Activated CD8-positive, alpha-beta memory T cell treated with anti-CD3 and anti-CD28 coated beads, Interleukin-2, amount 10 ng/mL, durations not matched to agents 7 days and 5 days (primary cell): ENCODE measurements at regions of chr12 and their contacts with region 1.

Region 1: GRCh38 chr12:53344824-53345485 is 8.8 kb upstream of the SP7 start:
- DNase-seq: peak; percentile 82
- ATAC-seq: peak; percentile 83
- H3K4me3 Mint-ChIP-seq: peak overlapping the region; percentile 79
- H3K27ac Mint-ChIP-seq: peak overlapping the region; percentile 71
- H3K4me1 Mint-ChIP-seq: peaks cover 21% of the 10 kb centered on the region
- H3K27me3 Mint-ChIP-seq: peaks cover 12% of the 10 kb centered on the region

Region 2: GRCh38 chr12:53295070-53295890 is 49.7 kb before region 1 on chr12 and contains the start of gene PFDN5:
- CTCF ChIA-PET with region 1: interaction called, 14 read pairs
- DNase-seq: peak; percentile 93
- ATAC-seq: peak; percentile 88
- H3K4me3 Mint-ChIP-seq: peak within 1 kb of the TSS; percentile 98
- H3K27ac Mint-ChIP-seq: peak within 1 kb of the TSS; percentile 92
- H3K4me1 Mint-ChIP-seq: peaks cover 49% of the 10 kb centered on the region
- H3K27me3 Mint-ChIP-seq: no peaks in the 10 kb centered on the region
- total RNA-seq, gene PFDN5: 283 to 298 TPM

Region 3: DNA sequence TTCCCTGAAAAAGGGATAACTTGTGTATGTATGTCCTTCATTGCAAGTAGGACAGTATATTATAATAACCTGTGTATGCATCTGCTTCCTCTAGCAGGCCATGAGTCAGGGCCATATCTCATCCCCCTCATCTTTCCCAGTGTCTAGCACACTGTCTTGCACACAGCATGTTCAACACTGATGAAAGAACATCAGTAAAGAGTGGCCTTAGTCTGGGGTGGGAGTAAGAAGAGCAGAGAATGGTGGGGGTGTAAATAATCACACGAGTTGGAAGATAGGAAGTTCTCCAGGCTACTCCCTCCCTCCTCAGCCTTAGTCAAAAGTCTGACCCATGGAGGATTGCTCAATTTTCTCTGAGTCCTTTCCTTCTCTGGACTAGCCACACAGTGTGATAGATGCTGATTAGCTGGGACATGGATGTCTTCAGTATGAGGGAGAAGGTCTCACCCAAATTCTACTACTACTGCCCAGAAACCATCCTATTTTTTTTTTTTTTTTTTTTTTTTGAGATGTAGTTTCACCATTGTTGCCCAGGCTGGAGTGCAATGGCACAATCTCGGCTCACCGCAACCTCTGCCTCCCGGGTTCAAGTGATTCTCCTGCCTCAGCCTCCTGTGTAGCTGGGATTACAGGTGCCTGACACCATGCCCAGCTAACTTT is 20.4 kb after region 1 on chr12:
- CTCF ChIA-PET with region 1: interaction called, 11 read pairs
- DNase-seq: no peak
- ATAC-seq: no peak
- H3K4me3 Mint-ChIP-seq: no peak overlapping the region
- H3K27ac Mint-ChIP-seq: no peak overlapping the region
- H3K4me1 Mint-ChIP-seq: peaks cover 11% of the 10 kb centered on the region
- H3K27me3 Mint-ChIP-seq: no peaks in the 10 kb centered on the region

Region 4: GRCh38 chr12:53379389-53380103 is 34.6 kb after region 1 on chr12:
- CTCF ChIA-PET with region 1: interaction called, 110 read pairs
- DNase-seq: peak; percentile 99
- ATAC-seq: peak; percentile 77
- H3K4me3 Mint-ChIP-seq: no peak overlapping the region
- H3K27ac Mint-ChIP-seq: no peak overlapping the region
- H3K4me1 Mint-ChIP-seq: peaks cover 34% of the 10 kb centered on the region
- H3K27me3 Mint-ChIP-seq: no peaks in the 10 kb centered on the region

Region 5: DNA sequence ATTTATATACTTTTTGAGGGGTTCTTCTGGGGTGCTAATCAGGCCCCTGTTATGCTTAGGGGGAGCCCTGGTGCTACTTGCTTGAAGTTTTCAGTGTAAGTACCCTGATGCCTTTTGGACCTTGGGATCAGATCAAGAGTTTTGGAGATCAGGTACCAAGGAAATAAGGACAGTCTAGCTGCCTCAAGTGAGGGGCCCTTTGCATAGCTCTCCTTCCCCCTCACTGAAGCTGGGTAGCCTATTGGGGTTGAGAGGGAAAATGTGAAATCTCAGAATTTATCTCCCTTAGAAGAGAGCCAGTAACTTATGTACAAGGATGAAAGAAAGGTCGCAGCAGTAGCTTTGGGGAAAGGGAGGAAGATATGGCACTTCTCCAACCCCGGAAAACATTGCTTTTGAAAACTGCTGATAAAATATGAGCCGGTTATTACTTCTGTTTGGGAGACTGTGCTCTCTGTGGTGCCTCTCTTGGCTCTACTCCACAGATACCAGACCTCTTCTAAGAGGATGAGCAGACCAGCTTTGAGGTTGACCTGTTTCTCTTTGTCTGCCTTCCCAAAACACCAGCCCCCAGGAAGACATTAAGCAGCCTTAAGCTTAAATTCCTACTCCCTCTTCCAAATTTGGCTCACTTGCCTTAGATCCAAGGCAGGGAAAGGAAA is 69.9 kb after region 1 on chr12:
- CTCF ChIA-PET with region 1: interaction called, 11 read pairs
- DNase-seq: no peak
- ATAC-seq: no peak
- H3K4me3 Mint-ChIP-seq: no peak overlapping the region
- H3K27ac Mint-ChIP-seq: no peak overlapping the region
- H3K4me1 Mint-ChIP-seq: peaks cover 23% of the 10 kb centered on the region
- H3K27me3 Mint-ChIP-seq: no peaks in the 10 kb centered on the region

Region 6: DNA sequence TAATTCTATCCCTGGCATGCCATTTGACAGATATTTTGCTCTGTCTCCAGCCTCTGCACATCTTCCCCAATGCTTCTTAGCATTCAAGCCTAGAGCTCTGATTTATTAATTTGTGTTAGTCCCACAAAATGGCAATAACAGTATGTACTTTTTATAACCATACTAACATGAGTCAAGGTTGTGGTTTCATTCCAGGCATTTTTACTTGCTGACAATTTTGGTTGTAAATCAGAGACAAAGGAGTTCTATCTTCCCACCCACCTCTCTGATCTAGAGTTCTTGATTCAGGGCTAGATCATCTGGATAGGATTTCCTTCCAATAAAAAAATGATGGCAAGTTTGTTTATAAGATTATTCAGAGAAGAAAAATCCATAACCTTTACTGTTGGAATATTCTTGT is 425.3 kb after region 1 on chr12:
- CTCF ChIA-PET with region 1: no interaction called
- DNase-seq: no peak
- ATAC-seq: no peak
- H3K4me3 Mint-ChIP-seq: no peak overlapping the region
- H3K27ac Mint-ChIP-seq: no peak overlapping the region
- H3K4me1 Mint-ChIP-seq: no peaks in the 10 kb centered on the region
- H3K27me3 Mint-ChIP-seq: peaks cover 59% of the 10 kb centered on the region

Region 7: DNA sequence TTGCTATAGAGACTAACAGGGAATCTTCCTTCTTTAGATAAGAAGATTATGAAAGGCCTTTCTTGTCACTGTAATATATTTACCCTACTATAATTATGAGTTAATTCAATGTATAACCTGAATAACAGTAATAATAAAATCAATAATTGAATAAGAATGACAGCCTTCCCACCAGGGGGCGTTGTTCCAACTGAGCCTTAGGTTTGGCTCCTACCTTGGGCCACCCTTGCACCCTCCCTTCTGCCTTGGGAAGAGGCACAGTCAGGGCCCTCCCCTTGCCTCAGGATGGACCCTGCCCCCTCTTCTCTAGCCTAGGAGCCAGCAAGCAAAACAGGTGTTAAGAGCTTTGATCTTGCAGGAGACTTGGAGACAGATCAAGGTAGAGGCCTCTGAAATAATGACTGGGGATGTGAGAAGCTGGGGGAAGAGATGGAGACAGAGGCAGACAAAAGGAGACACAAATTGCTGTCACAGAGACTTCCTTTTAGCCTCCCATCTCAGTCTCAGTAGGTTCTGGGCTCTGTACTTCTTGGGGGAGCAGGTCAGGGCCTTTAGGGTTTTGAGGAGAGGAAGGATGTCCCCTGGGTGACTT is 446.9 kb after region 1 on chr12:
- CTCF ChIA-PET with region 1: no interaction called
- DNase-seq: no peak
- ATAC-seq: no peak
- H3K4me3 Mint-ChIP-seq: no peak overlapping the region
- H3K27ac Mint-ChIP-seq: no peak overlapping the region
- H3K4me1 Mint-ChIP-seq: no peaks in the 10 kb centered on the region
- H3K27me3 Mint-ChIP-seq: peaks cover 30% of the 10 kb centered on the region